ENCODE measurements at regions of chr7 and their contacts with region 1.

Region 1: GRCh38 chr7:73726083-73726466 is 6.6 kb upstream of the STX1A start:
- DNase-seq: no peak
- H3K4me3 ChIP-seq: no peak overlapping the region
- H3K27ac ChIP-seq: no peak overlapping the region
- H3K4me1 ChIP-seq: peaks cover 7% of the 10 kb centered on the region
- H3K27me3 ChIP-seq: no peaks in the 10 kb centered on the region
- CTCF ChIP-seq: 0 out of 2 replicates have a peak, but pooled peaks have one; percentile 4

Region 2: GRCh38 chr7:73557108-73557396 is 169.0 kb before region 1 on chr7:
- CTCF ChIA-PET with region 1: no interaction called
- POLR2A ChIA-PET with region 1: interaction called, 14 read pairs
- intact Hi-C with region 1: no loop called
- DNase-seq: peak; percentile 94
- H3K4me3 ChIP-seq: peak overlapping the region; percentile 90
- H3K27ac ChIP-seq: peak overlapping the region; percentile 100
- H3K4me1 ChIP-seq: peaks cover 11% of the 10 kb centered on the region
- H3K27me3 ChIP-seq: no peaks in the 10 kb centered on the region
- CTCF ChIP-seq: no peak

Region 3: GRCh38 chr7:73612598-73613269 is 113.3 kb before region 1 on chr7:
- CTCF ChIA-PET with region 1: interaction called, 45 read pairs
- POLR2A ChIA-PET with region 1: interaction called, 10 read pairs
- intact Hi-C with region 1: loop called (anchors 1 kb)
- DNase-seq: peak; percentile 64
- H3K4me3 ChIP-seq: no peak overlapping the region
- H3K27ac ChIP-seq: no peak overlapping the region
- H3K4me1 ChIP-seq: no peaks in the 10 kb centered on the region
- H3K27me3 ChIP-seq: no peaks in the 10 kb centered on the region
- CTCF ChIP-seq: 0 out of 2 replicates have a peak, but pooled peaks have one; percentile 28

Region 4: DNA sequence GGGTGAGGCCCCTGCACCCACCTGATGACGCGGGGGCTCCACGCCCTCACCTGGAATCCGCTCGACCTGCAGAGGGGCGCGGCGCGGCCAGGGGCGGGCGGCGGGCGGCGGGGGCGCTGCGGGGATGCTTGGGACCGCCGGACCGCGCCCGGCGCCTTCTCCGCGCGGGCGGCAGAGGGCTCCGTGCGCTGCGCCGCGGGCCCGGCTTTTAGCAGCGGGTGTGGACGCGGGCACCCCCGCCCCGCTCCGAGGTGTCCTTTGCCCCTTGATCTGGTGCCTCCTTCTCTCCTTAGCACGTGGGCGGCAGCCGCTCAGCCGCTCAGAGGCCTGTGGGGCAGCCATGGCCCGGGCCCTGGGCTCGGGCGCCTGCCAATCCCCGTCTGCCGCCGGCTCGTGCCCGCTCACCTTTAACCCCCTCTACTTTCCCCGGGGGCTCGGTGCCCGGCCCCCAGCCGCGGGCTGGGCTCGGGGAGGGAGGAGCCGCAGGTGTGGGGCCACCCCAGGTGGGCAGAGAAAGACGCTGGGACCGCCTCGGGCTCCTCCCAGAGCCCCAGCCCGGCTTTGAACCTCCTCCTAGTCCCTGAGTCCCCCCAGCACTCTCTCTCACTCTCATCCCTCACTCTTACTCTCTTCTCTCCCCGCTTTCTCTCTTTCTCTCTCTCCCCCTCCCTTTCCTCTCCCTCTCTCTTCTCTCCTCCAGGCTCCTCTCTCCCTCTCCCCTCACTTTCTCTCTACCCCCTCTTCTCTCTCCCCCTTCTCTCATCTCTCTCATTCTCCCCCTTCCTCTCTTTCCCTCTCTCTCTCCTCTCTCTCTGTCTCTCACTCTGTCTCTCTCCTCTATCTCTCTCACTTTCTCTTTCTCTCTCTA is 78.1 kb before region 1 on chr7:
- CTCF ChIA-PET with region 1: interaction called, 10 read pairs
- POLR2A ChIA-PET with region 1: no interaction called
- intact Hi-C with region 1: no loop called
- DNase-seq: no peak
- H3K4me3 ChIP-seq: peak overlapping the region; percentile 62
- H3K27ac ChIP-seq: no peak overlapping the region
- H3K4me1 ChIP-seq: peaks cover 10% of the 10 kb centered on the region
- H3K27me3 ChIP-seq: peaks cover 8% of the 10 kb centered on the region
- CTCF ChIP-seq: peak; percentile 16; the same call in 1 of the 2 replicates

Region 5: DNA sequence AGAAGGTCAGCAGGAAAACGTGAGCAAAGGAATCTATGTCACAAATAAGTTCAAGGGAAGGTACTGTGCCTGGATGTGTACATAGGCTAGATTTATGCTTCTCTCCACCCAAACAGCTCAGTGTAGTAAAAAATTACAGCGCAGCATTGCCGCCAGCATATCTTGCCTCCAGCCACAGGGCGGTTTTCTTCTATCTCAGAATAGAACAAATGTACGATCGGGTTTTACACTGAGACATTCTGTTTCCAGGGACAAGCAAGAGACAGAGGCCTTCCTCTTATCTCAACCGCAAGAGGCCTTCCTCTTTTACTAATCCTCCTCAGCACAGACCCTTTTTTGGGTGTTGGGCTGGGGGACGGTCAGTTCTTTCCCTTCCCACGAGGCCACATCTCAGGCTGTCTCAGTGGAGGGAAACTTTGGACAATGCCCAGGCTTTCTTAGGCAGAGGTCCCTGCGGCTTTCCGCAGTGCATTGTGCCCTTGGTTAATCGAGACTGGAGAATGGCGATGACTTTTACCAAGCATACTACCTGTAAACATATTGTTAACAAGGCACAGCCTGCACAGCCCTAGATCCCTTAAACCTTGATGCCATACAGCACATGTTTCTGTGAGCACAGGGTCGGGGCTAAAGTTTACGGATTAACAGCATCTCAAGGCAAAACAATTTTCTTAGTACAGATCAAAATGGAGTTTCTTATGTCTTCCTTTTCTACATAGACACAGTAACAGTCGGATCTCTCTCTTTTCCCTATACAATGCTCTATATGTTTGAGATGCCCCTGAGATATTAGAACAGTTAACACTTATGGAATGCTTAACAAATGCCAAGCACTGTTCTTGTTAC is 24.1 kb after region 1 on chr7:
- CTCF ChIA-PET with region 1: interaction called, 10 read pairs
- POLR2A ChIA-PET with region 1: no interaction called
- intact Hi-C with region 1: no loop called
- DNase-seq: no peak
- H3K4me3 ChIP-seq: no peak overlapping the region
- H3K27ac ChIP-seq: no peak overlapping the region
- H3K4me1 ChIP-seq: no peaks in the 10 kb centered on the region
- H3K27me3 ChIP-seq: no peaks in the 10 kb centered on the region
- CTCF ChIP-seq: no peak